OCI-LY7 (cell line): ENCODE measurements at regions of chr10 and their contacts with region 1.

Region 1: GRCh38 chr10:14659626-14660196 is 115.0 kb downstream of the FAM107B start:
- DNase-seq: peak; percentile 94
- H3K4me3 ChIP-seq: peak overlapping the region; percentile 46
- H3K27ac ChIP-seq: peak overlapping the region; percentile 96
- H3K4me1 ChIP-seq: peaks cover 73% of the 10 kb centered on the region
- CTCF ChIP-seq: no peak

Region 2: GRCh38 chr10:14191871-14192270 is 467.8 kb before region 1 on chr10:
- CTCF ChIA-PET with region 1: no interaction called
- POLR2A ChIA-PET with region 1: no interaction called
- intact Hi-C with region 1: no loop called
- DNase-seq: no peak
- H3K4me3 ChIP-seq: no peak overlapping the region
- H3K27ac ChIP-seq: no peak overlapping the region
- H3K4me1 ChIP-seq: no peaks in the 10 kb centered on the region
- CTCF ChIP-seq: no peak

Region 3: DNA sequence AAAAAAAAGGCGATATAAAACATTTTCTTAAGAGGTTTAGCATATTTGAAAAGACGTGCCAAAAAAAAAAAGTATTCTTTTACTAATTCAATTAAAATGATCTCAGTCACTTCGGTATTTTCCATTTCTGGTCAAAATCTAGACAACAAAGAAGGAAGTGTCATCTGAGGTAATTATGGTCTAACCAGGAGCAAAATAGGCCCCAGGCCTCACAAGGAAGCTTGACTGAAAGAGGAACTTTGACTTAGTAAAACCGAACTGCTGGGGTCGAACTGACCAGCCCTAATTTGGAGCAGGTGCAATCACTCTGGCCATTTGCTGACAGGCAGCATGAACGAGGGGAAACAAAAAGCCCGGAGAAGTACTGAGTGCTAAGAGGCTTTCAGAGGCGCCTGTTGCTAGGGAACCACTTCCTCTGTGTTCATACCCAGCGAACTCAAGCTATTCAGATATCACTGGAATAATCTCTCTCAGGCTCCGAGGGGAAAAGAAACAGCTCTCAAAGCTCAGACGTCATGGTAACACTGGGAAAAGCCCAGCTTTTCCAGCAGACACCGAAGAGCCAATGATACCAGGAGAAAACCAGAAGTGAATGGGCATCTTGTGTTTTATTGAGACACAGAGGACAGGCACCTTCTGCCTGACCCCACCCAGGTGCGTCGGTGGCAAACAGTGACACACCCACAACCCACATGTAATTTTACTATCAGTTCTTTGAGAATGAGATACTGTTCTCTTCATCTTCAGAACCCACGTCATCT is 11.5 kb before region 1 on chr10:
- CTCF ChIA-PET with region 1: interaction called, 4 read pairs
- POLR2A ChIA-PET with region 1: interaction called, 24 read pairs
- intact Hi-C with region 1: loop called (anchors 1 kb)
- DNase-seq: peak; percentile 94
- H3K4me3 ChIP-seq: peak overlapping the region; percentile 56
- H3K27ac ChIP-seq: peak overlapping the region; percentile 90
- H3K4me1 ChIP-seq: peaks cover 80% of the 10 kb centered on the region
- CTCF ChIP-seq: no peak

Region 4: GRCh38 chr10:14742815-14743214 is 83.1 kb after region 1 on chr10:
- CTCF ChIA-PET with region 1: no interaction called
- POLR2A ChIA-PET with region 1: interaction called, 4 read pairs
- intact Hi-C with region 1: loop called (anchors 2 kb)
- DNase-seq: peak; percentile 73
- H3K4me3 ChIP-seq: peak overlapping the region; percentile 34
- H3K27ac ChIP-seq: peak overlapping the region; percentile 94
- H3K4me1 ChIP-seq: peaks cover 56% of the 10 kb centered on the region
- CTCF ChIP-seq: no peak

Region 5: GRCh38 chr10:14751014-14751896 is 91.5 kb after region 1 on chr10:
- CTCF ChIA-PET with region 1: no interaction called
- POLR2A ChIA-PET with region 1: interaction called, 8 read pairs
- intact Hi-C with region 1: loop called (anchors 2 kb)
- DNase-seq: peak; percentile 96
- H3K4me3 ChIP-seq: peak overlapping the region; percentile 37
- H3K27ac ChIP-seq: peak overlapping the region; percentile 88
- H3K4me1 ChIP-seq: peaks cover 63% of the 10 kb centered on the region
- CTCF ChIP-seq: no peak

Region 6: GRCh38 chr10:14822879-14823755 is 163.4 kb after region 1 on chr10:
- CTCF ChIA-PET with region 1: no interaction called
- POLR2A ChIA-PET with region 1: interaction called, 3 read pairs
- intact Hi-C with region 1: loop called (anchors 2 kb)
- DNase-seq: peak; percentile 80
- H3K4me3 ChIP-seq: no peak overlapping the region
- H3K27ac ChIP-seq: no peak overlapping the region
- H3K4me1 ChIP-seq: peaks cover 28% of the 10 kb centered on the region
- CTCF ChIP-seq: peak; percentile 99

Region 7: DNA sequence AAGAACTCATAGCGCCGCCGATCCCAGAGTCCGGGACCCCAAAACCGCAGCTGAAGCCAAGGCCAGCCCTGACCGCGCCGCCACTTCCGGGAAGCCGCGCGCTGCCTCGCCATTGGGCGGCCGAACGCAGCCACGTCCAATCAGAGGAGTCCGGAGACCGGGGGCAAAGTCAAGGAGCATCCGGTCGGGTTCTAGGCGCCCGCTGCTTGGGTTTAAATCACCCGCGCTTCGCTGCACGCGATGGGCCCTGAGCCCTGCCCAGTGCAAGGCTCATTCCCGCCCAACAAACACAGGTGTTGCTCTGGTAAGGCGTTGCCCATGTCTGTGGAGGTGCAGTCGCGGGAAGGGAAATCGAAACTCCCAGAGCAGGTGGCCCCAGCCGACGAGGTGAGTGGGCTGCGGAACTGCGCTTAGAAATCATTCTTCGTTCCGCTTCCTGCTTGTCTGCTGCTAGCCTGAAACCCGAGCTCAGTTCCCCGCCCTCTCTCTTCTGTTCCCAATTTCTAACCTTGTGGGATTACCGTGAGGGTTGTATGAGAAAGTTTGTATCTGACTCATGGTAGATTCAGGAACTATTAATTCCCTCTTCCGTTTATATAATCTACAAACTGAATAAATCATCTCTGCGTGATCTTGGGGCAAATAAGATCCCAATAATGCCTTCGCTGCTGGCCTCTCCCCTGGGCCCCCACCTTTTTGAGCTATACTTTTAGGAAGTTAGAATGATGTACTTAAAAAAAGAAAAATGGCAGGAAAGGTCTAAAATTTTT is 294.5 kb after region 1 on chr10 and contains the start of gene DCLRE1C:
- CTCF ChIA-PET with region 1: no interaction called
- POLR2A ChIA-PET with region 1: no interaction called
- intact Hi-C with region 1: loop called (anchors 1 kb)
- DNase-seq: peak; percentile 97
- H3K4me3 ChIP-seq: peak within 1 kb of the TSS; percentile 83
- H3K27ac ChIP-seq: peak within 1 kb of the TSS; percentile 96
- H3K4me1 ChIP-seq: peaks cover 57% of the 10 kb centered on the region
- CTCF ChIP-seq: no peak
- total RNA-seq, gene DCLRE1C: 45.3 and 81.3 TPM in 2 replicates